Activated B cell treated with CpG ODN at 0.5 μM for 24 hours (primary cell): ENCODE measurements at regions of chr1 and their contacts with region 1.

Region 1: GRCh38 chr1:39701049-39701439 is 9.8 kb upstream of the HPCAL4 start:
- DNase-seq: no peak
- ATAC-seq: no peak
- H3K4me3 Mint-ChIP-seq: no peak overlapping the region
- H3K27ac Mint-ChIP-seq: no peak overlapping the region
- H3K4me1 Mint-ChIP-seq: no peaks in the 10 kb centered on the region
- H3K27me3 Mint-ChIP-seq: peaks cover 23% of the 10 kb centered on the region
- CTCF ChIP-seq: no peak

Region 2: GRCh38 chr1:39711104-39711965 is 10.3 kb after region 1 on chr1:
- CTCF ChIA-PET with region 1: no interaction called
- POLR2A ChIA-PET with region 1: interaction called, 10 read pairs
- intact Hi-C with region 1: no loop called
- DNase-seq: no peak
- ATAC-seq: no peak
- H3K4me3 Mint-ChIP-seq: no peak overlapping the region
- H3K27ac Mint-ChIP-seq: no peak overlapping the region
- H3K4me1 Mint-ChIP-seq: no peaks in the 10 kb centered on the region
- H3K27me3 Mint-ChIP-seq: peaks cover 23% of the 10 kb centered on the region
- CTCF ChIP-seq: no peak

Region 3: GRCh38 chr1:39799770-39800470 is 98.9 kb after region 1 on chr1:
- CTCF ChIA-PET with region 1: interaction called, 6 read pairs
- POLR2A ChIA-PET with region 1: no interaction called
- intact Hi-C with region 1: loop called (anchors 1 kb)
- DNase-seq: peak; percentile 64
- ATAC-seq: peak; percentile 68
- H3K4me3 Mint-ChIP-seq: peak overlapping the region; percentile 81
- H3K27ac Mint-ChIP-seq: peak overlapping the region; percentile 93
- H3K4me1 Mint-ChIP-seq: peaks cover 11% of the 10 kb centered on the region
- H3K27me3 Mint-ChIP-seq: no peaks in the 10 kb centered on the region
- CTCF ChIP-seq: no peak

Region 4: DNA sequence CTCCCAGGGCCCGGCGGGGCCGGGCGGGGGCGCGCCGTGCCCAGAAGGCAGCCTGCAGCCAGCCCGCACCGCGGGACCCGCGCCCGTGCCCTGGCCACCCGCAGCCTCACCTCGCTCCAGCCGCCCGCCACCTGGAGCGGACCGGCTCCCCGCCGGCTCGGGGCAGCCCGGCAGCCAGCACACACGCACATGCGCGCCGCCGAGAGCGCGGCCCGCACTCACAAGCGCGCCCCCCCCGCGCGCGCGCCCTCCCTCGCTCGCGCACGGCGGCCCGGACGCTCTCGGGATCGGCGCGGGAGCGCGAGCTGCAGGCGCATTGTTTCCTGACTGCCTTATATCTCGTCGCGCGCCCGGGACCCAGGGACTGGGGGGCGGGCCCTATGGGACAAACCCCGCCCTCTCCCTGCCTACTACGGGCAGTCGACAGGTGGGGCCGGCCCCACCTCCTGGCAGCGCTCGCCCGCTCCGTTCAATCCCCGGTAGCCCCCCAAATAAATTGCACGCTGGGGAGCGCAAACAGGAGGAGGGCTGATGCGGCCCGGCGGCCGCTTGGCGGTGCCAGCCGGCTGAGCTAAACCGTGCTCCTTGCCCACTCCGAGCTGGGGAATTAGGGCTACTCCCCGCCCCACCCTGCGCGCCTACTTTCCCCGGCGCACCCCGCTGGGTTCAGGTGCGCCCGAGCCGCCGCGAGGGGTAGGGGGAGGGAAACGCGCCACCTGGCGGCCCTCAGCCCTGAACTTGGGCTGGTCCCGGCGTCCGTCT is 200.8 kb after region 1 on chr1 and contains the start of gene MYCL:
- CTCF ChIA-PET with region 1: no interaction called
- POLR2A ChIA-PET with region 1: no interaction called
- intact Hi-C with region 1: loop called (anchors 2 kb)
- DNase-seq: peak; percentile 63
- ATAC-seq: peak; percentile 81
- H3K4me3 Mint-ChIP-seq: peak within 1 kb of the TSS; percentile 75
- H3K27ac Mint-ChIP-seq: no peak within 1 kb of the TSS
- H3K4me1 Mint-ChIP-seq: peaks cover 6% of the 10 kb centered on the region
- H3K27me3 Mint-ChIP-seq: peaks cover 42% of the 10 kb centered on the region
- CTCF ChIP-seq: peak; percentile 46
- total RNA-seq, gene MYCL: 0.10 and 0.29 TPM in 2 replicates